ENCODE measurements at regions of chr22 and their contacts with region 1.

Region 1: DNA sequence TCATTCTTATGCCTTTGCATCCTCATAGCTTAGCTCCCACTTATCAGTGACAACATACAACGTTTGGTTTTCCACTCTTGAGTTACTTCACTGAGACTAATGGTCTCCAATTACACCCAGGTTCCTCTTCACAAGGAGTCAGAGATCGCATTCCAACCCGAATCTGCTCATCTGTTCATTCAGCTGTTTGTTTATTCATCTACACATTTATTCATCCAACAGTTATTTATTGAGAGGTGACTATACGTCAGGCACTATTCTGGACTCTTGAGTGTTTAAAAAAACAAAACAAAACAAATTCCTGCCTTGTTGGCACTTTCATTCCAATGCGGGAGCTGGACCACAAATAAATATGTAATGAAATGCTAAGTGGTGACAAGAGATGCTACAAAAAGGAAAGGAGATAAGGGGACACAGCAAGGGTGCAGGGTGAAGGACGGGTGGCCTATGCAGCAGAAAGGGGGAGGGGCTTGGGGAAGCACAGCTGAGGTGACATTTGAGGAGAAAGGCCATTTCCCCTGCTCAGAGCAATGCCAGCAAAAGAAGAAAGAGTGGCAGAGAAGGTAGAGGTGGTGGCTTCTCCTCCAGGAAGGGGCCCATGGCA is 393.8 kb upstream of the SYN3 start:
- DNase-seq: no peak
- ATAC-seq: no peak
- H3K4me3 ChIP-seq: no peak overlapping the region
- H3K27ac ChIP-seq: no peak overlapping the region
- H3K4me1 ChIP-seq: no peaks in the 10 kb centered on the region
- H3K27me3 ChIP-seq: no peaks in the 10 kb centered on the region
- CTCF ChIP-seq: no peak
- EP300 ChIP-seq: no peak
- POLR2A ChIP-seq: no peak
- RAD21 ChIP-seq: no peak

Region 2: DNA sequence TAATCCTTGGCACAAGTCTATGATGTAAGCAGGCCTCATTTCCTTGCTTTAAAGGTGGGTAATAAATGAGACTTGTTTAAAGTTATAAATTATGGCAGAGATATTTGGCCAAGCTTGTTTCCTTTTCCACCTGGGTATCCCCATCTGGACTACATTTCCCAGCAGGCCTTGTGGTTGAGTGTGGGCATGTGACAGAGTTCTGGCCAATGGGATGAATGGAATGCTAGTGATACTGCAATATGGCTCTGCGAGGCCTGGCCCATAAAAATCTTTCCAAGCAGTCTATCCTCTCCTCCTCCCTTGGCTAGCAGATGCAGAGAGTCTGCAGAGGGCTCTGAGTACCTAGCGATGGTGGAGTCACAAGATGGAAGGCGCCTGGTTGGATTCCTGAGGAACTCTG is 547.9 kb before region 1 on chr22:
- CTCF ChIA-PET with region 1: no interaction called
- POLR2A ChIA-PET with region 1: no interaction called
- in situ Hi-C with region 1: loop called (anchors 10 kb)
- intact Hi-C with region 1: no loop called
- DNase-seq: peak; percentile 62 to 78 (median 72)
- ATAC-seq: peak; percentile 98
- H3K4me3 ChIP-seq: no peak overlapping the region
- H3K27ac ChIP-seq: no peak overlapping the region
- H3K4me1 ChIP-seq: no peaks in the 10 kb centered on the region; a peak in 2 of 5 replicates
- H3K27me3 ChIP-seq: no peaks in the 10 kb centered on the region
- CTCF ChIP-seq: no peak
- EP300 ChIP-seq: no peak
- POLR2A ChIP-seq: no peak
- RAD21 ChIP-seq: no peak